ENCODE measurements at regions of chr7 and their contacts with region 1.

Region 1: DNA sequence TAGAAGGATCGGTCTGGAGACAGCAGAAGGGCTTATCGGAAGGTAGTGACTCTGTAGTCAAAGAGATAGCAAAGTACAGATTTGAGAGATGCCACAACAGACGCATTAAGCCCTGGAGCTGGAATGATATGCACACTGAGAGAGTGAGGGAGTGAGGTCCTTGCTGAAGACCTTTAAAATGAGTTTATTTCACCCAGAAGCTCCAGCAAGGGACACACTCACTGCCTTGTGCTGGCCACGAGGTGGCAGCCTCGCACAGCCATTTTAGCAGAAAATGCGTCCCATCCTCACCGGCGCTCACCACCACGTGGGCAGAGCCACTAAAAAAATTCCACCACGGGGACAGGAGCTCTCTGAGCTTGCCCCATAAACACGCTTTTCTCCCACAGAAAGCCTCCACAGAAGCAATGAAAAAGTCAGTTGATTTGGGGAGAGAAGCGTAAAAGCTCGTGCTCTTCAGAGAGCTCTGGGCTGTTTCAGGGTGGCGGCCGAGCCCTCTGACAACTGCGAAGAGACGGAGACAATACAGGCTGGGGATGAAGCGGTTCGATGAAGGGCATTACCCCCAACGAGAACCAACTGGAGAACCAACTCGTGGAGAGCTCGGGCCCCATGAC is 163.0 kb upstream of the KLF14 start:
- DNase-seq: peak; percentile 82
- ATAC-seq: peak; percentile 73
- H3K4me3 Mint-ChIP-seq: no peak overlapping the region
- H3K27ac Mint-ChIP-seq: peak overlapping the region; percentile 74
- H3K4me1 Mint-ChIP-seq: peaks cover 82% of the 10 kb centered on the region
- H3K27me3 Mint-ChIP-seq: no peaks in the 10 kb centered on the region

Region 2: GRCh38 chr7:130912862-130913631 is 16.0 kb after region 1 on chr7:
- CTCF ChIA-PET with region 1: interaction called, 49 read pairs
- DNase-seq: peak; percentile 92
- ATAC-seq: peak; percentile 83
- H3K4me3 Mint-ChIP-seq: peak overlapping the region; percentile 87
- H3K27ac Mint-ChIP-seq: peak overlapping the region; percentile 99
- H3K4me1 Mint-ChIP-seq: peaks cover 89% of the 10 kb centered on the region
- H3K27me3 Mint-ChIP-seq: no peaks in the 10 kb centered on the region

Region 3: DNA sequence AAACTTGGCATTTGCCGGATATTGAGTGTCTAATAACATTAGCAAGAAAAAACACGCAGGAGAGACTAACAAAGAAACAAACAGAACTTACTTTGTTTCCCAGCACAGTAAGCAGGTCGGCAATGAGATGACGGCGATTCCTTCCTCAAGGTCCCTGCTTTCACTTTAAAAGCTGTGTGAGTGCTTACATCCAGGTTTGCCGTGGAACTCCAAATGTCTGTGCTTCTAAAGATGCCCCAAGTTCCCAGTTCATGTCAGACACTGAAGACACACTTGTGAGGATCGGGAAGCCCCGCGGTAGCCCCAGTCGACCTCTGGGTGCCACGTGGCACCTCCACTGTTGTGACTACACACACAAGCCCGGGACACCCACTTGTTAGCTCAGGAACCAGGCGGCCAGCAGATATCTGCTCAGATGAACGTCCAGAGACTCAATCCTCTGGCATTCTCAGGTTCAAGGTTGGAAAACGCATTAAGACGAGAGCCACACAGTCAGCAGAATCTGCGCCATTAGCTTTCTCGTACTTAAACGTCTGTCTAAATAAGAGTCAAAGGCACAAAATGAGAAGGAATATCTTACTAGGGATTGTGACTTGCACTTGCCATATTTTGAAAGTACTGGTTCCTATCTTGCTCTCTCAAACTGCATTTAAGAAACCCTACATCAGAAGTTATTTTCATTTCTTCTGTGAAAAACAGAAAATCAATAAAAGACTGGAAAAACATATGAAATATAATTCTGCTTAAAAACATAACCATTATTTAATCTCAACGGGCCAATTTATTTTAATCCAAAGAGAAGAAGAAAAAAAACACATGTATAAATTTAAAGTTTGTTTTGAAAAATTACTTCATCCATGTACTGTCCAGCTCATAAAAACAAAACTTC is 44.6 kb after region 1 on chr7:
- CTCF ChIA-PET with region 1: interaction called, 20 read pairs
- DNase-seq: no peak
- ATAC-seq: peak; percentile 14
- H3K4me3 Mint-ChIP-seq: peak overlapping the region; percentile 77
- H3K27ac Mint-ChIP-seq: peak overlapping the region; percentile 95
- H3K4me1 Mint-ChIP-seq: peaks cover 91% of the 10 kb centered on the region
- H3K27me3 Mint-ChIP-seq: no peaks in the 10 kb centered on the region

Region 4: GRCh38 chr7:130966246-130967009 is 69.4 kb after region 1 on chr7:
- CTCF ChIA-PET with region 1: interaction called, 13 read pairs
- DNase-seq: peak; percentile 75
- ATAC-seq: peak; percentile 31
- H3K4me3 Mint-ChIP-seq: peak overlapping the region; percentile 7
- H3K27ac Mint-ChIP-seq: peak overlapping the region; percentile 81
- H3K4me1 Mint-ChIP-seq: peaks cover 71% of the 10 kb centered on the region
- H3K27me3 Mint-ChIP-seq: no peaks in the 10 kb centered on the region

Region 5: GRCh38 chr7:131002600-131002999 is 105.6 kb after region 1 on chr7:
- CTCF ChIA-PET with region 1: interaction called, 53 read pairs
- DNase-seq: no peak
- ATAC-seq: no peak
- H3K4me3 Mint-ChIP-seq: no peak overlapping the region
- H3K27ac Mint-ChIP-seq: no peak overlapping the region
- H3K4me1 Mint-ChIP-seq: peaks cover 58% of the 10 kb centered on the region
- H3K27me3 Mint-ChIP-seq: no peaks in the 10 kb centered on the region

Region 6: DNA sequence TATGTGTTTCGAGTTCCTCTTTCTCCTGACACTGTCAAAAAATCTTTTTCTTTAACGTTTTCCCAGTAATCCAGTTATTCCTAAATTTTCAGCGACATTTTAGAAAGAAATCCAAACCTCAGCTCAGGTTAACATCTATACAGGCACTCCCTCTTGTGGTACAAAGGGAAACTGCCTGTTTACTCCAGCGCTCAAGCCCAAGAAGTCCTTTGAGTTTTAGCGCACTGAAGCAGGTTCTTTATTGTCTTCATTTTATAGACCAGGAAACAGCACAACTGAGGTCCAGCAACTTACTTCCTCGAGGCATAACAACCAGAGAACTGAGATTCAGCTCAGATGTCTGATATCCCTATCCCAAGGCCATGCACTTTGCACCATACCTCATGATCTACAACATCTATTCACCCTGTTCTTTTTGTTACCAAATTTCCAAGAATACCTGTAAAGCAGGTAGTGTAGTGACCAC is 143.5 kb after region 1 on chr7:
- CTCF ChIA-PET with region 1: interaction called, 52 read pairs
- DNase-seq: peak; percentile 69
- ATAC-seq: peak; percentile 81
- H3K4me3 Mint-ChIP-seq: peak overlapping the region; percentile 35
- H3K27ac Mint-ChIP-seq: peak overlapping the region; percentile 66
- H3K4me1 Mint-ChIP-seq: peaks cover 54% of the 10 kb centered on the region
- H3K27me3 Mint-ChIP-seq: no peaks in the 10 kb centered on the region

Measured in activated CD8-positive, alpha-beta memory T cell treated with anti-CD3 and anti-CD28 coated beads, Interleukin-2, amount 10 ng/mL, durations not matched to agents 7 days and 5 days (primary cell).